K562 (cell line): ENCODE measurements at regions of chr6 and their contacts with region 1.

Region 1: GRCh38 chr6:27503436-27504030 is 30.6 kb upstream of the ZNF184 start:
- DNase-seq: peak; percentile 58 to 92 (median 72)
- ATAC-seq: peak; percentile 63
- H3K4me3 ChIP-seq: peak overlapping the region; percentile 55
- H3K27ac ChIP-seq: peak overlapping the region; percentile 87
- H3K4me1 ChIP-seq: peaks cover 8 to 29% of the 10 kb centered on the region in 2 experiments
- H3K27me3 ChIP-seq: no peaks in the 10 kb centered on the region
- CTCF ChIP-seq: 0 out of 6 replicates have a peak, but pooled peaks of 1 of the 3 experiments have one; percentile 1
- EP300 ChIP-seq: no peak; the same call in 1 of the 2 replicates
- POLR2A ChIP-seq: no peak
- RAD21 ChIP-seq: peak in 1 of 2 experiments; percentile 3; a peak in 1 of 4 replicates

Region 2: GRCh38 chr6:27230758-27231111 is 272.8 kb before region 1 on chr6:
- CTCF ChIA-PET with region 1: no interaction called
- POLR2A ChIA-PET with region 1: no interaction called
- in situ Hi-C with region 1: no loop called
- intact Hi-C with region 1: loop called (anchors 5 kb)
- DNase-seq: peak in 1 of 4 experiments; percentile 36
- ATAC-seq: peak; percentile 10
- H3K4me3 ChIP-seq: peak overlapping the region; percentile 47
- H3K27ac ChIP-seq: peak overlapping the region; percentile 48; the same call in 2 of the 3 replicates
- H3K4me1 ChIP-seq: no peaks in the 10 kb centered on the region; a peak in 1 of 5 replicates
- H3K27me3 ChIP-seq: no peaks in the 10 kb centered on the region
- CTCF ChIP-seq: no peak
- EP300 ChIP-seq: no peak
- POLR2A ChIP-seq: no peak
- RAD21 ChIP-seq: no peak

Region 3: DNA sequence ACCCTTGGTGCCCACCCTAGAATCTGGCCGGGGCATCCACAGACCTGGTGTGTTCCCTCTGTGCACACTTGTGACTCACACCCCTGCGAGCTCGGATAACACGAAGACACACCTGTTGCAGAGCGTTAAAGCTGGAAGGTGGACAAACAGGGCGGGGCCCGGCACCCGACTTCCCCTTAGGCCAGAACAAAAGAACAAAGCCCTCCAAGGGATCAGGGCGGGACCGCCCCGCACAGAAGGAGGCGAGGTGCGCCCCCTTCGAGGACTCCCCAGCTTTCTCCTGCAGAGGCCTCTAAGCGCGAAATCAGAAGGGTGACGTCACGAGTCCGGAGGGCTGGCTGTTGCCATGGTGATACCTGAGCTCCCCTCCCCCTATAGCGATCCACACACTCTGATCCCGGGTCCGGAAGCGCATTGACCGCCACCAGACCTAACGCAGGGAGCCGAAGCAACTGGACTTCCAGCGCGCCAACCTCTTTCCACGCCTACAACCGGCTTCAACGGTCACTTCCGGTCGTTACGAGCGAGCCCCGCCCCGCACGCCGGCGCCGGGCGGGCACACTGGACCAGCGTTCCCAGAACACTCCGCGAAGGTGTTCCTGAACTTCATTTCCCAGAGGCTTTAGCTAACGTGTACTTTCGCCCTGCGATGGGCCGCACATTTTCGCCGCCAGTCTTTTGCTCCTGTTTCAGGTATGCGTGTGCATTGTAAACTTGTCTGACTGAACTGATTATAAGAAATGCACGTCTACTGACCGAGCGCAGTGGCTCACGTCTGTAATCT is 30.7 kb before region 1 on chr6 and contains the start of gene ZNF184:
- CTCF ChIA-PET with region 1: no interaction called
- POLR2A ChIA-PET with region 1: interaction called, 13 read pairs
- in situ Hi-C with region 1: no loop called
- intact Hi-C with region 1: loop called (anchors 2 kb)
- DNase-seq: peak; percentile 97 to 100 (median 98)
- ATAC-seq: peak; percentile 91
- H3K4me3 ChIP-seq: peak within 1 kb of the TSS; percentile 75
- H3K27ac ChIP-seq: peak within 1 kb of the TSS; percentile 91
- H3K4me1 ChIP-seq: peaks cover 8 to 11% of the 10 kb centered on the region in 2 experiments; a peak in 4 of 5 replicates
- H3K27me3 ChIP-seq: no peaks in the 10 kb centered on the region
- CTCF ChIP-seq: peak; percentile 31 to 42 (median 37); a peak in 5 of 6 replicates
- EP300 ChIP-seq: peak; percentile 92
- POLR2A ChIP-seq: peak; percentile 92
- RAD21 ChIP-seq: peak; percentile 10 to 18; a peak in 2 of 4 replicates
- polyA plus RNA-seq, gene ZNF184: 7.6 to 12.8 TPM

Region 4: DNA sequence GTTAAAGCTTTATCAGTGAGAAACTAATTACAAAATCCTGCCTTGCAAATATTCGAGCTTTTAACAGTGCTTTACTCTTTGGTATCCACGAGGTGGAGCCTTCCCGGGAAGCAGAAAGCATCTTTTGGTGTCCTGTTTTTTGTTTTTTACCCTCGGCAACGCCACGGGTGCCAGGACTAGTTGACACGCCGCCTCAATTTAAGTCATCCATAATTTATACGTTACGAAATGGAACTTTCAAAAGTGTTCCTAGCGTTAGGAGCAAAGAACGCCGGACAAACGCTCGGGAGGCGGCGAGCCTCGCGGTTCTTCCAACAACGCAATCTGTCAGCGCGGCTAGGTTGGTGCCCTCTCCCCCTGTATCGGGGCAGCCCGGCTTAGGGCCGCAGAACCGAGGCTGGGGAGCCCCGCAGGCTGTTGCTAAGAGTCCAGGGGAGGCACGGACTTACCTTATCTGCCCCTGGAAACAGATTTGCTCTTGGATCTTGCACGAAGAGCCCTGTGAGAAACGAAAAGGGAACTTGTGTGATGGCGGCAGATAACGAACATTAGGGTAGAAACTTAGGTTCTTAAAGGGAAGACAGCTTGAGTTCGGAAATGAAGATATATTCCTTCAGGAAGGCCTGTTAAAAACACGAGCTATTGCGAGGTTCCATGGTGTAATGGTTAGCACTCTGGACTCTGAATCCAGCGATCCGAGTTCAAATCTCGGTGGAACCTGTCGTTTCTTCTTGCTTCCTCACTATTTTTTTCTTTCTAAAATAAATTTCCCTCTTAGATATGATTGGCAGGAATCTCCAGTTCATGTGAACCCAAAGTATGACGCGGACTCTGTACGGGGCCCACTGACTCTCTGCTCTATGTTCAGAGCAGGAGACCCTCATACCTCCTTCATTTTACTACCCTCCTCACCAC is 15.6 kb after region 1 on chr6:
- CTCF ChIA-PET with region 1: no interaction called
- POLR2A ChIA-PET with region 1: interaction called, 35 read pairs
- in situ Hi-C with region 1: no loop called
- intact Hi-C with region 1: no loop called
- DNase-seq: peak; percentile 66 to 93 (median 69)
- ATAC-seq: peak; percentile 89
- H3K4me3 ChIP-seq: peak overlapping the region; percentile 69
- H3K27ac ChIP-seq: peak overlapping the region; percentile 82
- H3K4me1 ChIP-seq: peaks cover 4 to 7% of the 10 kb centered on the region in 2 experiments; a peak in 3 of 5 replicates
- H3K27me3 ChIP-seq: no peaks in the 10 kb centered on the region
- CTCF ChIP-seq: peak; percentile 77 to 90 (median 86)
- EP300 ChIP-seq: peak; percentile 63
- POLR2A ChIP-seq: peak; percentile 66
- RAD21 ChIP-seq: peak; percentile 76 to 80

Region 5: DNA sequence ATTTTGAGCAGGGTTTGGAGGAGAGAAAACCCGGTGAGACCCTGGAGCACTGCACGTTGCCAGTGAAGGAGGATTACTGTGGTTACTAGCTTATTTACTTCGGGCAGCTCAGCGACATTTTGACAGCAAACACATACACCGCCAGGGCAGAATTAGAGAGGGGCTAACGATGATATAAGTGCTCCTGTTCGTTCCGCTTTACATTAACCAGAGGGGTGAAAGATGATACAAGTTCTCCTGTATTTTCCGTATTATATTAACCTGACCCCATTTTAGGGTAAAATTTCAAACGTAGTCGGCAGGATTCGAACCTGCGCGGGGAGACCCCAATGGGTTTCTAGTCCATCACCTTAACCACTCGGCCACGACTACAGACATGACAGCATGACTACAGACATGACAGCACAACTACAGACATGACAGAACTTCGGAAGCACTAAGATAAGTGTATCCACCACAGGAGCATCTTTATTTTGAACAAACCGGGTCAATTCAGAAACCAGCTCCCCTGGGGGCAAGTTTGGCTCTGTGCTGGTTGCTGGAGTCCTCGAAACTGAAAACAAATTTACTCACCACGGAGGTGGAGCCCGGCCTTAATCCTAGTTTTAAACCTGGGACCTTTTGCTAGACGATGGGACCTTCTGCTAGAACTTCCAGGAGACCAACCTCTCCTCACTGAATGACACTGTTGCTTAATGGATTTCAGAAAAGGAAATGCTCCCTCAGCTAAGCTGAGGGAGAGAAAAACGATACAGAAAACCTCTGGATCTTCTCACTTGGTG is 49.8 kb after region 1 on chr6:
- CTCF ChIA-PET with region 1: no interaction called
- POLR2A ChIA-PET with region 1: interaction called, 7 read pairs
- in situ Hi-C with region 1: no loop called
- intact Hi-C with region 1: loop called (anchors 2 kb)
- DNase-seq: peak; percentile 69 to 94 (median 77)
- ATAC-seq: peak; percentile 83
- H3K4me3 ChIP-seq: peak overlapping the region; percentile 52
- H3K27ac ChIP-seq: peak overlapping the region; percentile 93
- H3K4me1 ChIP-seq: 0 out of 5 replicates have a peak, but pooled peaks cover 0 to 11% of the 10 kb centered on the region in 2 experiments
- H3K27me3 ChIP-seq: no peaks in the 10 kb centered on the region
- CTCF ChIP-seq: 0 out of 6 replicates have a peak, but pooled peaks of 1 of the 3 experiments have one; percentile 1
- EP300 ChIP-seq: peak; percentile 79
- POLR2A ChIP-seq: no peak
- RAD21 ChIP-seq: peak; percentile 16 to 27; a peak in 1 of 4 replicates

Region 6: DNA sequence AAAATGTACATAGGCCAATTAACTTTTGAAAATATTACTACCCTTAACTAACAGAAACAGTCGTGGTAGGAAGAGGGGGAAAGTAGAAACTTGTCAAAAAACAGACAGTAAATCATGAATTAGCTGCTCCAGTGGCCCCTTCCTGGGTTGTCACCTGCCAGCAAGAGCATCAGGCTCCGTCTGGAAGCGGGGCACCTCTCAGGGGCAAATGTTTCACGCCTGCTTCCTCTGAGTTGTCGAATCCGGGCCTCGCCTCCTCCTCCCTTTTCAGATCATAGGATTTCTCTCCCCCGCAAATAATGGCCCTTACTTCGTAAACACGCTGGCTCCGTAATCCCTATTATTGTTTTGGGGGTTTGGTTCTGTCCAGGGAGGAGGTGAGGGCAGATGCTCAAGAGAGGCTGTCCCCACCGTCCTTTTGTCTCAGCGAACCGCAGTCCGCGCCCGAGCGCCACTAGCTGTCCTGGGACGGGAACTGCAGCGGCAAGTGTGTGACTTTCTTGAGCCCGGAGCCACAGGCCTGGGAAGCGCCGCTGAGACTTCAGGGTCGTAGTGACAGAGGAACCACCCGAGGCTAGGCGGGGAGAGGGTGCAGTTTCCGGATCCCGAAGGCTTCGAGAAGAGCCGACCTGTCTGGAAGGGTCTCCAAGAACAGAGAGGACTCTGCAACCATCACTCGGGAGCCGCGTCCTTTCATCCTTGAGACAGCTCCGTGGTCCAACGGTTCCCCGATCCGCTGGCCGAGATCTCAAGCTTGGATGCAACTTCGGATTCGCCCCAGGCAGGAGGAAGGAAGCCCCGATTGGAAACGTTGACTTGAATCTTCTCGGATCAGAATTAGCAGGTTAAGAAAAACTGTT is 183.9 kb after region 1 on chr6:
- CTCF ChIA-PET with region 1: no interaction called
- POLR2A ChIA-PET with region 1: no interaction called
- in situ Hi-C with region 1: no loop called
- intact Hi-C with region 1: loop called (anchors 5 kb)
- DNase-seq: peak; percentile 78 to 97 (median 82)
- ATAC-seq: peak; percentile 89
- H3K4me3 ChIP-seq: peak overlapping the region; percentile 63
- H3K27ac ChIP-seq: peak overlapping the region; percentile 78
- H3K4me1 ChIP-seq: peaks cover 5 to 24% of the 10 kb centered on the region in 2 experiments; a peak in 4 of 5 replicates
- H3K27me3 ChIP-seq: no peaks in the 10 kb centered on the region
- CTCF ChIP-seq: peak; percentile 92 to 96 (median 95)
- EP300 ChIP-seq: 0 out of 2 replicates have a peak, but pooled peaks have one; percentile 14
- POLR2A ChIP-seq: no peak
- RAD21 ChIP-seq: peak; percentile 71 to 87